Psoas muscle (tissue), 8 donors: ENCODE measurements at regions of chr4 and their contacts with region 1.

Region 1: DNA sequence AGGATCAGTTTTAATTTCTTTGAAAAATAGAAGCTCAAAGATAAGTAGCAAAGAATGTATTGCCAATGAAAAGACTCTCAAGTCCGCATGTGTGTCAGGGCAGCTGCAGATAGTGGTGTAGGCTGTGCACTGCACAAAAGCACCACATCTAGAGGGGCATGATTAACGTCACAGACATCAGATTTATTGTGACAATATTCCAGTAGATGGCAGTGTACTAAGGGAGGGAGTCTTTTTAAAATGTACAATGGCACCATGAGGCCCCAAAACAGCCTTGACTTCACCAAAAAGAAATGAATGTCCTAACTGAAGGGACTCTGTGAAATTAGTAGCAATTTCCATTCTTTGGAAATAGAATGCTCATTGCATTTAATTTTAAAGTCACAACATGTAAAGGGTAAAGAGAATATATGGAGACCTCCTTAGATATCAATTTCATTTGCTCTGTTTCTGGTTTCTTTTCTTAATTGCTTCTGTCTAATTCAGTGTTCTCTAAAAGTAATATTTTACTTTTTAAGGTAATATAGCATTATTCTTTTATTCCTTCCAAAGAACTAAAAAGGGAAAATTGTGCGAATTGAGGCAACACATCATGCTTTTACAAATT is 98.4 kb downstream of the ZNF827 start:
- DNase-seq: no peak
- ATAC-seq: peak; percentile 67 to 89 (median 86)
- H3K4me3 ChIP-seq: no peak overlapping the region
- H3K27ac ChIP-seq: no peak overlapping the region
- H3K4me1 ChIP-seq: no peaks in the 10 kb centered on the region
- H3K27me3 ChIP-seq: no peaks in the 10 kb centered on the region
- CTCF ChIP-seq: peak; percentile 61

Region 2: DNA sequence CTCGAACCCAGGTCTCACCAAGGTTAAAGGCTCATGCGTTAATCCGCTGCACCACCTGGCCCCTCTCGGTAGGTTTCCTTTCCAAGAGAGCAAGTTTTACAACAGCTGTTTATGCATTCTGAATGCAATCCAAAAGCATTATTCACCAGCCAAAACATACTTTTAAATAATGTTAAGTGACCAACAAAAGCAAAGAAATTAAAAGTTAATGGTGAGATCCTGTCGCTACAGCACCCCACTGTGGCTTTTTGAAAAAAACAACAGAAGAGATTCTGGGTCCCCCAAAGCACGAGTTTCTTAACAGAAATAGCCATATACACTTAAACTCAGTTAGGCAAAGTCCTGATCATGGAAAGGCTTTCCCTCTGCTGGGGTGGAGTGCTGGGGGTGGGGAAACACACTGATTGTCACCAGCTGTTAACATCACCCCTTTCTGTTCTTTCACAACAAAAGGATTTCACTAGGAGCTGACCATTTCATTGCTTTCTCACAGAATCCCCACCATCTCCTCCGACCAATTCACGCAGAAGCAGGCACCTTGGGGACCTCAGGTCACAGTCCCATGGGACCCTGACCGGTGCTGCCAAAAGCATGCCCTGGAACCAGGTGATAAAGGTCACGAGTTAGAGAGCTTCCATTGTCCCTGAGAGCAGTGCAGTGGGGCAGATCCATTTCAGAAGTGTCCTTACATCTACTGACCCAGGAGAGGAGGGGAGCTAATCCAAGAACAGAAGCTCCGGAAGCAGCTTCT is 47.2 kb after region 1 on chr4:
- intact Hi-C with region 1: loop called in 1 of 2 experiments (anchors 2 kb)
- DNase-seq: peak in 1 of 2 donors; percentile 33
- ATAC-seq: peak; percentile 56 to 74 (median 60)
- H3K4me3 ChIP-seq: no peak overlapping the region
- H3K27ac ChIP-seq: peak overlapping the region; percentile 57
- H3K4me1 ChIP-seq: peaks cover 28% of the 10 kb centered on the region
- H3K27me3 ChIP-seq: no peaks in the 10 kb centered on the region
- CTCF ChIP-seq: no peak

Region 3: DNA sequence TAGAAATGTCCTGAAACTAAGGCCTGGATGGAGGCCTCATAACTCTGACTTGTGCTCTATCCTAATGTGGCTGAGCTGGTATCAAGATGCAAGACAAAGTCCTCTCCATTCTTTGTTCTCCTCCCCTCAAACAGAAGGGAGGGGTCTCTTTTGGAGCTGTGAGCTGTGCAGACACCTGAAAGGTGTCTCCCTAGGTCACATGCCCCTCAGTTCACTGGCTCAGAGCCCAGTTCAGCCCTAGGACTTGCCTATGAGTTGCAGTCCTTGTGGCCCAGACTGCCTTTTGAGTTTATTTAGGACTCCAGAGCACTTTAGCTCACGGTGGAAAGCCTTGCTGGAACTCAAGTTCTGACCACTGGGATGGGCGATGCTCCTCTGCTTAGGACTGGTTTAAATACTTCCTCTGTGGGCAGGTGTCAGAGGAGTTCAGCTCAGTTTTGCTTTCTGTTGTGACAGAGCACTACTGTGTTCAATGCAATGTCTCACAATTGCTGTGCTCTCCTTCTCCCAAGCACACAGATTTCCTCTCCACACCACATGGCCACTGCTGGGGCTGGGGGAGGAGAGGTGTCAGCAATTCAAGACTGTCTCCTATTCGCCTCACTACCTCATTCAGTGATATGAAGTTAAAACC is 183.2 kb after region 1 on chr4:
- intact Hi-C with region 1: no loop called
- DNase-seq: no peak
- ATAC-seq: no peak
- H3K4me3 ChIP-seq: no peak overlapping the region
- H3K27ac ChIP-seq: no peak overlapping the region
- H3K4me1 ChIP-seq: no peaks in the 10 kb centered on the region
- H3K27me3 ChIP-seq: no peaks in the 10 kb centered on the region
- CTCF ChIP-seq: no peak

Region 4: DNA sequence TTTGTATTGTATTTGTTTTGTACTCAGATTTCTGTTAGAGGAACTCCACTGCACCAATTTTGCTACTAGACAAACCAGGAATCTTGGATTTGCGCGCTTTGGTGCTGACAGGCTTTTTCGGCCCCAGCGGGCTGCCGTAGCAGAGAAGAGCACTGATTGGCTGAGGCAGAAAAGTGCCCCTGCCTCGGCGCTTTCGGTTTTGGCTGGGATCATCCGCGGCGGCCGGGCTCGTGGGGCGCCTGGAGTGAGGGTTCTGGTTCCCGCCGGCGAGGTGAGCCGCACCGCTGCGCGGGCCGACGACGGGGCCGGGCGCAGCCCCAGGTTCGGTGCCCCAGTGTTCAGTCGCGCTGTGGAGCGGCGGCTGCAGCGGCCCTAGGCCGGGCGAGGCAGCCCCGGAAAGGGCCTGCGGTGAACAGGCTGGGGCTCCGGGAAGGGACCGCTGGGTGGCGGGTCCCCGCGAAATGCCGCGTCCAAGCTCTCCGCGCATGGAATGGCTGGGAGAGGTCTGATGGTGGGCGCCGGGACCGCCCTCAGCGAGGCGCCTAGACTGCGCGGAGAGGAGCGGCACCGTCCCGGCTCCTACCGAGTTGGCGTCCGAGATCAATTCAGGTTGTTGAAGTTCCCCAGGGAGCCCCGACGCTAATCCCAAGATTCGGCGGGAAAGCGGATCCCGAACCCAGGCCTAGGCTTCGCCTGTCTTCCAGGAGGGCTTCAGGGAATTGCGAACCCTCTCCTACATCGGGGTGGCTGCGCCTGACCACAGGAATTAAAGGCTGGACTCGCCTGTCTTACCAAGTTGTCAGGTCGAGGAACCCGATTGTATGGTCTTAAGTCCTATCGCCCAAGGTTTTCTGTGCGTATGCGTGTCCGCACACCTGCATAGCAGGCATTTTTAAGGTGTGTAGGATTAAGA is 335.5 kb after region 1 on chr4 and contains the start of gene LSM6:
- intact Hi-C with region 1: loop called in 1 of 2 experiments (anchors 10 kb)
- DNase-seq: peak; percentile 89 to 90
- ATAC-seq: peak; percentile 95 to 98 (median 96)
- H3K4me3 ChIP-seq: peak within 1 kb of the TSS; percentile 88
- H3K27ac ChIP-seq: peak within 1 kb of the TSS; percentile 93
- H3K4me1 ChIP-seq: peaks cover 39% of the 10 kb centered on the region
- H3K27me3 ChIP-seq: no peaks in the 10 kb centered on the region
- CTCF ChIP-seq: peak; percentile 16
- total RNA-seq, gene LSM6: 9.4 to 15.2 (median 14.6) TPM